RWPE1 (cell line): ENCODE measurements at regions of chr9 and their contacts with region 1.

Region 1: DNA sequence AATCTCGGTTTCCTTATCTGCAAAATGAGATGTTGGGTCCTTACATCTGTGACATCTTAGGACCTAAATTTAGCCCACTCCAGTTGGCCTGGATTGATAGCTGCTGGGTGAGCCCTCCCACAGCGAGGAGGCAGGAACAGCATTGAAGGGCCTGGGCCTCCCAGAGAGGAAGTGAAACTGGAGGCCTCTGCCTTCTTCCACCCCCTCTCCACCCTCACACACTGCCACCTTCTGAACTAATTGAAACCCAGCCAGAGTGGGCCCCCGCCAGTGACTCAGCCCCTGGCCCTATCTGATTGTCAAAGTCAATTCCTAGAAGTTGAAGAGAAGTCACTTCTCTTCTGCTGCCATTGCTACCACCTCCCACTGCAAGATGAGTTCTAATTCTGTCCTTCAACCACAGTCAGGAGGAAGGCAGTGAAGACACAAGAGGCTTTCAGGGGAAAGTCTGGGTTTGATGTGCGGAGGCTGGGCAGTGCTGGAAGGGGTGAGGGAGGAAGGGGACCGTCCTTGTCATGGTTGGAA is 55.2 kb upstream of the NEK6 start:
- DNase-seq: no peak
- H3K27ac ChIP-seq: no peak overlapping the region
- CTCF ChIP-seq: no peak

Region 2: GRCh38 chr9:124239249-124240073 is 37.0 kb after region 1 on chr9:
- CTCF ChIA-PET with region 1: no interaction called
- POLR2A ChIA-PET with region 1: interaction called, 13 read pairs
- DNase-seq: no peak
- H3K27ac ChIP-seq: no peak overlapping the region
- CTCF ChIP-seq: no peak